Spleen (tissue), 13 donors: ENCODE measurements at regions of chr10 and their contacts with region 1.

Region 1: GRCh38 chr10:27099916-27100812 is at the start of gene ANKRD26:
- DNase-seq: peak; percentile 99
- H3K4me3 ChIP-seq: peak within 1 kb of the TSS; percentile 61 to 87 (median 69)
- H3K27ac ChIP-seq: peak within 1 kb of the TSS; percentile 83 to 96 (median 92)
- H3K4me1 ChIP-seq: peaks cover 0 to 37% (median 22%) of the 10 kb centered on the region in 6 donors
- H3K27me3 ChIP-seq: no peaks in the 10 kb centered on the region
- CTCF ChIP-seq: no peak
- POLR2A ChIP-seq: peak in 2 of 3 donors; percentile 11 to 66
- total RNA-seq, gene ANKRD26: 7.7 to 19.7 (median 9.7) TPM

Region 2: DNA sequence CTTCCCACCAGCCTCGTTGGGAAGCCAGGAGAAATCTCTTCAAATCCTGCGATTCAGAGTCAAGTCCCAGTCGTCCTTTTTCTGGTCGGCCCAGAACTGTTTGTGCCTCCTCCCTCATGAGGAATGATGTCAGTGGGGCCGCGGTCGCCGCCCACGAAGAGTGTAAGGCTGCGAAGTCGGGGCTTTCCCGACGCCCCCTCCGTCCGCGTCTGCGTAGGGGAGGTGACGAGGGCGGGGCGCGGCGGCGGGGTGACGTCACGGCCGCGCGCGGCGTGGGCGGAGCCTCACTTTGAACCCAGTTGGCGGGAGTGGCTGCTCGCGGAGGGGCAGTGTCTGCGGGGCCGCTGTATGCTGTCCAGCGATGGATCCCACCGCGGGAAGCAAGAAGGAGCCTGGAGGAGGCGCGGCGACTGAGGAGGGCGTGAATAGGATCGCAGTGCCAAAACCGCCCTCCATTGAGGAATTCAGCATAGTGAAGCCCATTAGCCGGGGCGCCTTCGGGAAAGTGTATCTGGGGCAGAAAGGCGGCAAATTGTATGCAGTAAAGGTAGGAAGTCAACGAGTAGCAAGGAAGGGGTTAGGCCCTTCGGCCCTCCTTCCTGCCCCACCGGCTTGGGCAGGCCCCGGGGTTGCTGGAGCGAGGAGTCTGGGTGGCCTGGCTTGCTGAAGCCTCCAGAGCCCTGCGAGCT is 55.0 kb after region 1 on chr10 and contains the start of gene MASTL:
- intact Hi-C with region 1: loop called (anchors 10 kb)
- DNase-seq: peak; percentile 98
- H3K4me3 ChIP-seq: peak within 1 kb of the TSS; percentile 63 to 95 (median 83)
- H3K27ac ChIP-seq: peak within 1 kb of the TSS; percentile 97 to 100 (median 100)
- H3K4me1 ChIP-seq: peaks cover 12 to 64% (median 40%) of the 10 kb centered on the region in 6 donors
- H3K27me3 ChIP-seq: no peaks in the 10 kb centered on the region
- CTCF ChIP-seq: no peak
- POLR2A ChIP-seq: peak in 2 of 3 donors; percentile 83 to 96
- total RNA-seq, gene MASTL: 4.5 to 10.3 (median 8.6) TPM